Dendritic cell treated with granulocyte-macrophage colony-stimulating factor and Interleukin-4, amounts not matched to agents 40 ng/mL and 50 ng/mL, for 4 days (primary cell): ENCODE measurements at regions of chr3 and their contacts with region 1.

Region 1: DNA sequence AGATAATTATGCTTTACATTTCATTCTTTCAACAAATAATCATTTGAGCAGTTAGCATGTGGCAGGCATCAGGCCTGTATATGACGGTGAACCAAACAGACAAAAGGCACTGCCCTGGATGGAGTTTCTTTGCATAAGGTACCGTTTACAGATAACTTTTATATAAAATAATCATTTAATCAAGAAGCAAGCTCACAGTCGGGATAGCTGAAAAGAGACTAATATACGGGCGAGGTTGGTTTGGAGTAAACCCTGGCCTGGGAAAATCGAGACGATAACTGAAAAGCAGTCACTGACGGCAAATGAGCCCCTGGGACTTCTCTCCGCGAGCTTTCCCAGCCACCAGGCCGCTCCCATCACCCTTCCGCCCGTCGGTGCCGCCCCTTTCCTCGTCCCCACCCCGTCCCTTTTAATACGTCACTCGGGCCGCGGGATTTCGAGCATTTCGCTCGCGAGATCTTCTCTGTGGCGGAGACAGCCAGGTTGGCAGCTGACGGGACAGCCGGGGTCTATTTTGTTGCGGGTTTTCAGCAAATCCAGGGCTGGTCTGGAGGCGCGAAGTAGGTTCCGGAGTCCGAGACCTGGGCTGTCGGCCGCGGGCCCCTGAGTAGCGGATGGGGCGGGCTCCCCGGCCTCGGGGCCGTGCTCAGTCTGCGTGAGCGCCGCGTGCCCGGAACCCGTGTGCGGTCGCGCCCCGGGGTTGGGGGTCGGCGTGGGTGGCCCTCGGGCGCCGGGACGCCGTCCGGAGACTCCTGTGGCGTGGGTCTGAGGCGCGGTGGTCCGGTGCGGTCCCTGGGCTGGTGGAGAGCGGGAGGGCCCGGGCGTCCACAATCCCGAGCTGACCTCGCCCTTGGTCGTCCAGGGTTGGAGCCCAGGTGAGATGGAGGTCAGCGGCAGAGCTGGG is at the start of gene NMD3:
- H3K4me3 Mint-ChIP-seq: peak within 1 kb of the TSS; percentile 86
- H3K27ac Mint-ChIP-seq: peak within 1 kb of the TSS; percentile 92
- H3K4me1 Mint-ChIP-seq: peaks cover 12% of the 10 kb centered on the region
- H3K27me3 Mint-ChIP-seq: peaks cover 2% of the 10 kb centered on the region

Region 2: GRCh38 chr3:160399125-160400029 is 821.7 kb before region 1 on chr3 and contains the starts of genes IFT80 and SMC4:
- intact Hi-C with region 1: loop called (anchors 5 kb)
- H3K4me3 Mint-ChIP-seq: peak within 1 kb of the TSS; percentile 81
- H3K27ac Mint-ChIP-seq: peak within 1 kb of the TSS; percentile 96
- H3K4me1 Mint-ChIP-seq: peaks cover 35% of the 10 kb centered on the region
- H3K27me3 Mint-ChIP-seq: no peaks in the 10 kb centered on the region

Region 3: DNA sequence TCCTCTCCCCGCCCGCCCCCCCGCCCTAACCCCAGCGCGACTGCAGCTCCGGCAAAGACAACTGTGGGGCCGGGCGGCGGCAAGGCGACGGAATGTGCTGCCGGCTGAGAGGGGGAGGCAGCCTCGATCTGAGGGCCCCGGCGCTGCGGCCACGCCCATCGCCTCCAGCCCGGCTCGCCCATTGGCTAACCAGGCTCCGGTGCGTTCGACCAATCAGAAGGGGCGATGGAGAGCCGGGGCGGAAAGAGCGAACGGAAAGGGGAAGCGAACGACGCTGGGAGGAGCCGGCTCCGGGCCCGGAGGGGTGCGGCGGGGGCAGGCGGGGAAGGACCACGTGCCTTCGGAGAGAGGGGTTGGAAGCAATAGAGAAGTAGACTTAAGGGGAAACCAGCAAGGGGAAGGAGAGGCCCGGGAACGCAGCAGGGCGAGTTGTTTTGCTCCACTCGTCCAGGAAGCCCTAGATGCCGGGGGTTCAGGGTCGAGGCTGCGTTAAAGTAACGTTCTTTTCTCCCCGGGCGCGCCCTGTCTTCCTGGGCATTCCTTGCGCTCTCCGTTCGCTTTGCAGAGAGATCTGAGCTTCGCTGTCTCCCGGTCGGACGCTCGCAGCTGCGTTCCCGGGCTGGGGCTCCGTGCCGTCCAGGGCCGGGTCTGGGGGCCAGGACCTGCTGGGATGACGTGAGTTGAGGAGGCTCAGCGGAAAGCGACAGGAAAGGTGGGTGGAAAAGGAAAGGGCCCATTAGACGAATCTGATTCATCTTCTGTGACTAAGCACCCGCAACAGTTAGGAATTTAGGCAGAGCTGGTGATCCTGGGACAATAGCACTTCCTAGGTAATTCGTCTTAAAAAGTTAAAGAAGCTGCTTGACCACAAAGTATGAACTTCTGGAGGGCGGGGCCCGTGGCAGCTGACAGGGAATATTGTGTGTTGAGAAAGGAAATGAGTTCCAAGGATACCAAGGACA is 655.4 kb before region 1 on chr3 and contains the start of gene KPNA4:
- intact Hi-C with region 1: loop called (anchors 10 kb)
- H3K4me3 Mint-ChIP-seq: peak within 1 kb of the TSS; percentile 95
- H3K27ac Mint-ChIP-seq: peak within 1 kb of the TSS; percentile 100
- H3K4me1 Mint-ChIP-seq: peaks cover 57% of the 10 kb centered on the region
- H3K27me3 Mint-ChIP-seq: no peaks in the 10 kb centered on the region

Region 4: DNA sequence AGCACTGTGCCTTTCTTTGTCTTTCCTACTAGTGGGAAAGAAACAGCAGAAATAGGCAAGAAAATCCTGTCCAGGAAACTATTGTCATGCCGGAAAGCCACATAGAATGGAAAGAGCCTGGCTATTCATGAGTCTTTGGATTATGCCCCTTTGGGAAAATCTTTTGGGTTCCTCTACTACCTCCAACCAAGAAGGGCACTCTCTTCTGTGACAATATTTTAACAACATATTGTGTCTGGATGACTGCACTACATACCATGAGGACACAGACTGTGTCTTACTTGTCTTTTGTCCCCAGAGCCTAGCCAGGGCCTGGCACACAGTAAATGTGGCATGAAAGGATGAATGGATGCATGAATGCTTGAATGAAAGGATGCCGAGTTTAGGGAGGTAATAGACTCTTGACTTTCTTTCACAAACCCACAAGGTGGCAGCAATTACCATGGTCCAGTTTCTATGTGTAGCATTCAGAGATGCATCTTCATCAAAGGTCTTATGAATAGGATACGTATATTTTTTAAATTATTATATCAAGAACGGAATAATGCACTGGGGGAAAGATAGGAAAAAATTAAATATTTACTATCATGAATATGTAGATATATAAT is 513.8 kb before region 1 on chr3:
- intact Hi-C with region 1: loop called (anchors 10 kb)
- H3K4me3 Mint-ChIP-seq: no peak overlapping the region
- H3K27ac Mint-ChIP-seq: no peak overlapping the region
- H3K4me1 Mint-ChIP-seq: no peaks in the 10 kb centered on the region
- H3K27me3 Mint-ChIP-seq: peaks cover 14% of the 10 kb centered on the region

Region 5: DNA sequence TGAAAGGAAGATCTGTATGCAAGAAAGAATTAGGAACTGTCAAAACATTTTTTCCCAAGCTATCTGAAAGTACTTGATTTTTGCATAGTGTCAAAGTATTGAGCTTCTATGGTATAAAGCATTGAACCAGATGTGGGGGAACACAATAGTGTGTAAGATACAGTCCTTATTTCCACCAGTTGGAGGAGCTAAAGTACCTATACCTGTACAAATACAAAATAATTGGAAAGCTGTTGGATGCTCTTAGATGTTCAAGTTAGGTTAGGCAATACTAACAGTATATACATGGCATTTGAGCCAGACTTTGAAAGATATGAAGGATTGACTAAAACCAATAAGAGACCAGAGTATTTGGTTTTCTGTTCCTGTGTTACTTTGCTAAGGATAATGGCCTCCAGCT is 264.3 kb before region 1 on chr3:
- intact Hi-C with region 1: loop called (anchors 10 kb)
- H3K4me3 Mint-ChIP-seq: no peak overlapping the region
- H3K27ac Mint-ChIP-seq: no peak overlapping the region
- H3K4me1 Mint-ChIP-seq: peaks cover 9% of the 10 kb centered on the region
- H3K27me3 Mint-ChIP-seq: no peaks in the 10 kb centered on the region

Region 6: GRCh38 chr3:161035711-161036110 is 185.4 kb before region 1 on chr3:
- intact Hi-C with region 1: loop called (anchors 2 kb)
- H3K4me3 Mint-ChIP-seq: no peak overlapping the region
- H3K27ac Mint-ChIP-seq: peak overlapping the region; percentile 80
- H3K4me1 Mint-ChIP-seq: peaks cover 56% of the 10 kb centered on the region
- H3K27me3 Mint-ChIP-seq: no peaks in the 10 kb centered on the region

Region 7: DNA sequence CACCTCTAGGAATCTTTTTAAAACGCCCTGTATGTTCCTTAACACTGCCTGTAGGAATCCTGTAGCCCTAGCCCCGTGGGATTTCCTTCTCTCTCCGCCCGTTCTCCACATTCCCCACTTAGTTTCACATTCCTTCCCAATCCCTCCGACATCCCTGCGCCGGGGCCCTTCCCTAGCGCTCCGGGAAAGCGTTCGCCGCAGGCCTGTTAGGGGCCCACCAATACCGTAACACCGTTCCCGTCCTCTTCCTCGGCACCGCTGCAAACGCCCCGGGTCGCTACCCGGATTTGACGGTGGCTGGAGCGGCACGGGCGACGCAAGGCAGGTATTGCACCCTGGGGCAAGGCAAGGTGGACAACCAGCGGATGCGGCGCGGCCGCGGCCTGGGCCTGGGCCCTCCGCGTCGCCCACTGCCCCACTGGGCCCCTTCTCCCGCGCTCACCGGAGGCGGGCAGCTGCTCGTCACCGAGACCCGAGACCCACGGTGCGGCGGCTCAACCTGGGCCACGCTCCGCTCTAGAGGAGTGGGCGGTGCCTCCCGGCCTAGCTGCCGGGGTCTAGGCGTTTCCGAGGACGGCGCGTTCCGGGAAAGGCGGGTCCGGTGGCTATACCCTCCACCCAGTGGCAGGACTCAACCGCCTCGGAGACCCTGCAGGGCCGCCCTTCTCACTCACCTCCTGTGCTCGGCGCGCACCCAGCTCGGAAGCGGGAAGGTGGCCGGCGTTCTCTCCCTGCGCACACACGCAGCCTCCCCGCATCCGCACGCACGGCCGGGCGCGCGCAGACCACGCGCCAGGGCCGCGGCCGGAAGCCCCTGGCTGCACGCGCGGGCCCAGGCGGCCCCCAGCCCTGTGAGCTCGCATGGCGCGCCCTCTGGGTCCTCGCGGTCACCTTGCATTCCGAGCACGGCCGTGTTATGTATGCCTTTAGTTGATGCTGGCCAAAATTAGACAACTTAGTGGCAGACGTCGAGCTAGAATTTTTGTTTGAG is 116.2 kb before region 1 on chr3 and contains the start of gene B3GALNT1:
- intact Hi-C with region 1: loop called (anchors 10 kb)
- H3K4me3 Mint-ChIP-seq: peak within 1 kb of the TSS; percentile 77
- H3K27ac Mint-ChIP-seq: peak within 1 kb of the TSS; percentile 74
- H3K4me1 Mint-ChIP-seq: peaks cover 27% of the 10 kb centered on the region
- H3K27me3 Mint-ChIP-seq: peaks cover 11% of the 10 kb centered on the region